ENCODE measurements at regions of chrX and their contacts with region 1.

Region 1: GRCh38 chrX:49191033-49191871 is 5.1 kb upstream of the PRICKLE3 start:
- DNase-seq: peak; percentile 93
- ATAC-seq: peak; percentile 92
- H3K4me3 ChIP-seq: peak overlapping the region; percentile 37 to 72
- H3K27ac ChIP-seq: peak overlapping the region in 1 of 2 donors; percentile 80
- H3K4me1 ChIP-seq: no peaks in the 10 kb centered on the region
- H3K27me3 ChIP-seq: no peaks in the 10 kb centered on the region

Region 2: GRCh38 chrX:49269768-49270248 is 78.6 kb after region 1 on chrX and contains the start of gene PPP1R3F:
- intact Hi-C with region 1: loop called in 1 of 2 experiments (anchors 5 kb)
- DNase-seq: peak in 1 of 2 donors; percentile 97
- ATAC-seq: no peak
- H3K4me3 ChIP-seq: peak within 1 kb of the TSS; percentile 28 to 76
- H3K27ac ChIP-seq: peak within 1 kb of the TSS; percentile 24 to 97
- H3K4me1 ChIP-seq: peaks cover 0 to 2% of the 10 kb centered on the region in 2 donors
- H3K27me3 ChIP-seq: no peaks in the 10 kb centered on the region
- total RNA-seq, gene PPP1R3F: 7.9 to 9.2 TPM

Region 3: DNA sequence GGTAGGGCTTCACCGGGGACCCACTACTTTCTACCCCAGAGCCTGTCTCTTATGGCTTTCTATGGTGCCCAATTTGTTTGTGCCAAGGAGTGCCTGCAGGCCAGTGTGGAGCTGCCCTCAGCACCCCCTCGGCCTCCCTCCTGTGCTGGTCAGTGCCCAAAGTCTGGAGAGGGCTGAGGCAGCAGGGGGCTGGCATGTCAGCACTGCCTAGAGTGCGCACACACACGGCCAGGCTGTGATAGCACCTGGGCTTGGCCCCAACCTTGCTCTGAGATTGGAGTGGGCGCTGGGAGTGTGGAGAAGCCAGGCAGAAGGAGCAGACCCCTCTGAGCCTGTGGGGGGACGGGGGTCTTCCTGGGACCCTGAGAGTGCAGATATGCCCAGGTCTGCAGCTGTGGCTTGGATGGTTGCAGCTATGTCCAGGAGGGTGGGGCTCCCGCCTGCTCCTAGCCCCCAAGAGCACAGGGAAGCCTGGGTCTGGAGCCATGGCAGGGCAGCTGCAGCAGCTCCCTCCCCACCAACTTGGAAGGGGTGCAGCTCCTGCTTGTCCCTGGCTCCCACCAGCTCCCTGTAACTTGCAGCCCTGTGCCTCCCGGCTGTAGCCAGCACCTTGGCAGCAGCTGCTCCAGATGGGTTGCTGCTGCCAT is 453.9 kb after region 1 on chrX:
- intact Hi-C with region 1: no loop called
- DNase-seq: no peak
- ATAC-seq: peak; percentile 52
- H3K4me3 ChIP-seq: no peak overlapping the region
- H3K27ac ChIP-seq: no peak overlapping the region
- H3K4me1 ChIP-seq: no peaks in the 10 kb centered on the region
- H3K27me3 ChIP-seq: no peaks in the 10 kb centered on the region

Measured in aorta (tissue), 5 donors.